Posterior cingulate gyrus (tissue), 11 donors: ENCODE measurements at regions of chr1 and their contacts with region 1.

Region 1: GRCh38 chr1:53182111-53182593 is 14.5 kb upstream of the CPT2 start:
- DNase-seq: peak; percentile 51 to 97 (median 82)

Region 2: GRCh38 chr1:52927212-52928014 is 254.7 kb before region 1 on chr1 and contains the start of gene SCP2:
- intact Hi-C with region 1: loop called (anchors 10 kb)
- DNase-seq: peak; percentile 68 to 96 (median 82)

Region 3: DNA sequence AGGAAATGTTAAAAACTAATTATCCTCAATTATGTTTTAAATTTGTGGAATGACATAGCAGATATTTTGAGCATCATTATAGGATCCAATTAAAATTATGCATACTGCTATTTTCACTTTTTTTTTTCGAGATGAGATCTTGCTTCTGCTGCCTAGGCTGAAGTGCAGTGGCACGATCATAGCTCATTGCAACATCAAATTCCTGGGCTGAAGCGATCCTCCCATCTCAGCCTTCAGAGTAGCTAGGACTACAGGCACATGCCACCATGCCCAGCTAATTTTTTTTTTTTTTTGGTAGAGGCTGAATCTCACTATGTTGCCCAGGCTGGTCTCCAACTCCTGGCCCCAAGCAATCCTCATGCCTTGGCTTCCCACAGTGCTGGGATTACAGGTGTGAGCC is 28.4 kb before region 1 on chr1:
- intact Hi-C with region 1: no loop called
- DNase-seq: no peak

Region 4: GRCh38 chr1:53220171-53220961 is 38.2 kb after region 1 on chr1 and contains the start of gene CZIB:
- intact Hi-C with region 1: no loop called
- DNase-seq: peak; percentile 85 to 98 (median 90)